ENCODE measurements at regions of chr1 and their contacts with region 1.

Region 1: DNA sequence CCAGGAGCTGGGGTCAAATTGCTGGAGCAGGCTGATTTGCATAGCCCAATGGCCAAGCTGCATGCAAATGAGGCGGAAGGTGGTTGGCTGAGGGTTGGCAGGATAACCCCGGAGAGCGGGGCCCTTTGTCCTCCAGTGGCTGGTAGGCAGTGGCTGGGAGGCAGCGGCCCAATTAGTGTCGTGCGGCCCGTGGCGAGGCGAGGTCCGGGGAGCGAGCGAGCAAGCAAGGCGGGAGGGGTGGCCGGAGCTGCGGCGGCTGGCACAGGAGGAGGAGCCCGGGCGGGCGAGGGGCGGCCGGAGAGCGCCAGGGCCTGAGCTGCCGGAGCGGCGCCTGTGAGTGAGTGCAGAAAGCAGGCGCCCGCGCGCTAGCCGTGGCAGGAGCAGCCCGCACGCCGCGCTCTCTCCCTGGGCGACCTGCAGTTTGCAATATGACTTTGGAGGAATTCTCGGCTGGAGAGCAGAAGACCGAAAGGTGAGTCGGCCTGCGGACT is at the start of gene GADD45A:
- DNase-seq: peak; percentile 99
- H3K4me3 ChIP-seq: peak within 1 kb of the TSS; percentile 90
- H3K27ac ChIP-seq: peak within 1 kb of the TSS; percentile 99
- H3K4me1 ChIP-seq: peaks cover 57% of the 10 kb centered on the region
- H3K27me3 ChIP-seq: no peaks in the 10 kb centered on the region
- CTCF ChIP-seq: no peak
- total RNA-seq, gene GADD45A: 63.6 and 112 TPM in 2 replicates

Region 2: DNA sequence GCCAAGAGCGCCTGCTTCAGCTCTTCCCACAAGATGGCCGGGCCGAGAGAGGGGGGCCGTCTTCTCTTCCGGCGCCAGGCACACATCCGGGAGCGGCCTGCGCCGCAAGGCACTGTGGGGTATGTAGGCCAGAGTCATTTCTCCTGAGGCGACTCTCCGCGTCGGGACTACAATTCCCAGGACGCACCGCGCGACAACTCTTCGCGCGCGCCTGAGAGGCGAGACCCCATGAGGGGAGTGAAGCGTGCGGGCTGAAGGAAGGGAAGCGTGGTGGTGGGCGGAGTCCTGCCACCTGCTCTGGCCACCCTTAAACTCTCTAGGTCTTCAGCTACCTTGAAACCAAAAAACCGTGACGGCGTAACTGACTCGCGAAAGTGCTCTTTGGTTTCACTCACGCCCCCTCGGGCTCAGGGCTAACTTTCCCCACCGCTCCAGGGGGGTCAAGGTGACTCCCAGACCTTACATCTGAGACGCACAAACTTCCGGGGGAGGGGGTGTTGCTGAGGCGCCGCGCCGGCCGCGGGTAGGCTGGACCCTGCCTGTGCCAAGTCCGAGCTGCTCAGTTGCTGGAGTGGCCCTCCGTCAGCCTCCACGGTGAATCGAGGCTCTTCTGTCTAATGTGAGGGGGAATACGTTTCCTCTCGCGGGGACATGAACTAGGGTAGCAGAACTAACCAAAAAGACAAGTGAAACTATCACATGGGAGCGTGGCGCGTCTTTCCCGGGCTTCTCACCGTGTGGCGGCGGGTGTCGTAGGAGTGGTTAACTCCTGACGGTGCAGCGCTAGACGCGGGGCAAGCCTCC is 254.6 kb before region 1 on chr1 and contains the start of gene SERBP1:
- CTCF ChIA-PET with region 1: no interaction called
- POLR2A ChIA-PET with region 1: interaction called, 13 read pairs
- intact Hi-C with region 1: loop called (anchors 5 kb)
- DNase-seq: peak; percentile 93 to 97
- H3K4me3 ChIP-seq: peak within 1 kb of the TSS; percentile 78
- H3K27ac ChIP-seq: peak within 1 kb of the TSS; percentile 88
- H3K4me1 ChIP-seq: peaks cover 34% of the 10 kb centered on the region
- H3K27me3 ChIP-seq: no peaks in the 10 kb centered on the region
- CTCF ChIP-seq: 0 out of 2 replicates have a peak, but pooled peaks have one; percentile 11
- total RNA-seq, gene SERBP1: 312 and 339 TPM in 2 replicates

Region 3: DNA sequence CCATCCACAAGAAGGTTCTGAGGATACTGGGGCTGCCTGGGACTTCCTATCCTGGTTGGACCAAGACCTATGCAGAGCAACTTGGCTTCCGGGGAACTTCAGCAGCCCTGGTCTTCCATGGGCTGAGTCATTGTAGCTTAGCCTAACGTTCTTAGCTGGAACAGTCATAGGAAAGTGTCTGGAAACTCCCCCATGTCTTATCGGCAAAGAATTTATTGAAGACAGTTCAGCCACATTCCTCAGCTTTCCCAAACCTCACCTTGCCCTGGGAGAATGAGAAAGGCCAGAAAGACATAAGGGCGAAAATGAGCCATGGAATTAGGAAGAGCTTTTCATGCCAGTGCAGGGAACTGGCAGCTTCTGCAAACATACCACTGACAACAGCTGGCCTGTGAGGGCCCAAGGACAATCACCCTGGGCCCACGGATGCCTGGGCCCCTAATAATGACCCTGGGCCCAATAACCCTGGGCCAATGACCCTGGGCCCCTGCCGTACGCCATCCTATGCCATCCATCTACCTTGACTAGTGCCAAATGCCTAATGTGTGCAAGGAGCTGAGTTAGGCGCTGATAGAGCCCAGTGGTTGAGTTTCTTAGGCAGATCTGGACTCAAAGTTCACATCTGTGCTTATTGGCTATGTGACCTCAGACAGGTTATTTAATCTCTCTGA is 114.5 kb before region 1 on chr1:
- CTCF ChIA-PET with region 1: no interaction called
- POLR2A ChIA-PET with region 1: interaction called, 60 read pairs
- intact Hi-C with region 1: loop called (anchors 1 kb)
- DNase-seq: peak; percentile 77 to 99
- H3K4me3 ChIP-seq: peak overlapping the region; percentile 4; the same call in 1 of the 2 replicates
- H3K27ac ChIP-seq: peak overlapping the region; percentile 94
- H3K4me1 ChIP-seq: peaks cover 47% of the 10 kb centered on the region
- H3K27me3 ChIP-seq: no peaks in the 10 kb centered on the region
- CTCF ChIP-seq: no peak

Region 4: GRCh38 chr1:67626495-67627235 is 58.4 kb before region 1 on chr1:
- CTCF ChIA-PET with region 1: no interaction called
- POLR2A ChIA-PET with region 1: interaction called, 18 read pairs
- intact Hi-C with region 1: loop called (anchors 5 kb)
- DNase-seq: peak; percentile 22 to 93
- H3K4me3 ChIP-seq: no peak overlapping the region
- H3K27ac ChIP-seq: peak overlapping the region; percentile 87
- H3K4me1 ChIP-seq: peaks cover 40% of the 10 kb centered on the region
- H3K27me3 ChIP-seq: no peaks in the 10 kb centered on the region
- CTCF ChIP-seq: no peak

Region 5: GRCh38 chr1:67713057-67713846 is 28.1 kb after region 1 on chr1:
- CTCF ChIA-PET with region 1: no interaction called
- POLR2A ChIA-PET with region 1: interaction called, 10 read pairs
- intact Hi-C with region 1: no loop called
- DNase-seq: peak; percentile 70 to 92
- H3K4me3 ChIP-seq: no peak overlapping the region
- H3K27ac ChIP-seq: peak overlapping the region; percentile 70
- H3K4me1 ChIP-seq: peaks cover 44% of the 10 kb centered on the region
- H3K27me3 ChIP-seq: no peaks in the 10 kb centered on the region
- CTCF ChIP-seq: no peak

Region 6: GRCh38 chr1:67743072-67743725 is 58.1 kb after region 1 on chr1:
- CTCF ChIA-PET with region 1: no interaction called
- POLR2A ChIA-PET with region 1: no interaction called
- intact Hi-C with region 1: no loop called
- DNase-seq: peak in 1 of 2 experiments; percentile 16
- H3K4me3 ChIP-seq: no peak overlapping the region
- H3K27ac ChIP-seq: no peak overlapping the region
- H3K4me1 ChIP-seq: peaks cover 7% of the 10 kb centered on the region
- H3K27me3 ChIP-seq: no peaks in the 10 kb centered on the region
- CTCF ChIP-seq: no peak

Region 7: DNA sequence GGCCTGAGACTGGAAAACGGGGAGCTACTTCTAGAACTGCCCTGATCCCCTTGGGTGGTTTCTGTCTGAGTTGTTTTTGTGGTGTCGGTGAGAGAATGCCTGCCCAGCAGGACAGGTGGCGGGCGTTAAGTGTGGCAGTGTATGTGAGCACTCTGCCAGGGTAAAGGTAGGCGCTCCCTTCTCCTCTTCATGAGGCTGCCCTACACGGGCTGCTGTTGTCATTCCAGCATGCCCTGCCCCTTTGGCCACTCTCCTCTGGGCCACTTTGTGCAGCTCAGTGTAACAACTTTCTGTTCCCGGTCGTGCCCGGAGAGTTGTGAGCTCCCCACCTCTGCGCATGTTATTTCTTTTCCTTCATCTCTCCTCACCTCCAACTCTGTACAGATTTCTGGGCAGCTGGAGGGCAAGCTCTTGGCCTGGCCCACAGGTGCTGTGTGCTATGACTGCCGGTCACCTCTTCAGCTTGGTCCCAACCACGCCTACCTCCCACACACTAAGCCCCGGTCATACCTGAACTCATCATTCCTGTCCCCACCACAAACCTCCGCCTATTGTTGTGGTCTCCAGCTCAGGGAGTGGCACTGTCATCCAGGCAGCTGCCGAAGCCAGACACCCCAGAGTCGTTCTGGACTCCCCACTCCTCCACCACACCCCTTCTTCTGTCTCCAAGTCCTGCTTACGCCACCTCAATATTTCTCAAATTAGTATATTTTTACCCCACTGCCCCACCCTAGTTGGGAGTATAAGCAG is 68.8 kb after region 1 on chr1:
- CTCF ChIA-PET with region 1: no interaction called
- POLR2A ChIA-PET with region 1: interaction called, 23 read pairs
- intact Hi-C with region 1: loop called (anchors 1 kb)
- DNase-seq: peak; percentile 33 to 75
- H3K4me3 ChIP-seq: no peak overlapping the region
- H3K27ac ChIP-seq: no peak overlapping the region
- H3K4me1 ChIP-seq: peaks cover 43% of the 10 kb centered on the region
- H3K27me3 ChIP-seq: no peaks in the 10 kb centered on the region
- CTCF ChIP-seq: no peak

Region 8: DNA sequence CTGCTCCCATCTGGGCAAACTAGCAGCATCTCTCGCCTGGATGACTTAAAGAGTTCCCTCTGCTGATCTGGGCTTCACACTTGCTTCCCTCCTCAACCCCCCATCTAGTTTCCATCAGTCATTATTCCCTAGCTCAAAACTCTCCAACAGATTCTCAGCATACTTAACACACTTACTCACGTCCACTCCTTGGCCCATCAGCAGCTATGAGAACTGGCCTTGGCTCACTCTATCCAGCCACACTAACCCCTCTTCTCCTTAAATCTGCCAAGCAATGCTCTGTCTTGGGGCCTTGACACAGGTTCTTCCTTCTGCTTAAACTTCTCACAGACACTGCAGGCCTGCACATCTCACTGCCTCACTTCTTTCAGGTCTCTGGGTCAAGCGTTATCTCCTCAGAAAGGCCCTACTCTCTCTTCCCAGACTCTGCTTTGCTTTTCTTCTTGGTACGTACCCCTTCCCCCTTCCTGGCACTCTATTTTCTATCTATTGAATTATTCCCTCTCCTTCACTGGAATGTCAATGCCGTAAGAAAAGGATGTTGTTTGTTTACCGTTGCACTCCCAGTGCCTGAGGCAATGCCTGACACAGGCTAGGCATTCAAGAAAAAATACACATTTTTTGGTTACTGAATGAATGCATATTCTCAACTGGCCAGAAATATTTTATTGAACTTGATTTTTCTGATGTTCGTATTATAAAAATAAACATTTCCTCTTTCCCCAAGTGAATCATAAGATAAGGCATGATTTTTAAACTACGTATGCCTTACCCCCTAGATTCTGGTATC is 106.8 kb after region 1 on chr1:
- CTCF ChIA-PET with region 1: no interaction called
- POLR2A ChIA-PET with region 1: no interaction called
- intact Hi-C with region 1: loop called (anchors 1 kb)
- DNase-seq: peak; percentile 60 to 89
- H3K4me3 ChIP-seq: no peak overlapping the region; the same call in 1 of the 2 replicates
- H3K27ac ChIP-seq: peak overlapping the region; percentile 84
- H3K4me1 ChIP-seq: peaks cover 45% of the 10 kb centered on the region
- H3K27me3 ChIP-seq: no peaks in the 10 kb centered on the region
- CTCF ChIP-seq: no peak